Dorsolateral prefrontal cortex (tissue), 120 donors: ENCODE measurements at regions of chr1 and their contacts with region 1.

Region 1: GRCh38 chr1:8463144-8463927 is 145.4 kb downstream of the SLC45A1 start:
- DNase-seq: peak in 2 of 10 donors; percentile 37 to 52
- H3K4me3 ChIP-seq: peak overlapping the region in 24 of 59 donors; percentile 3 to 39 (median 20)
- H3K27ac ChIP-seq: peak overlapping the region; percentile 52 to 95 (median 86)
- H3K27me3 ChIP-seq: no peaks in the 10 kb centered on the region
- CTCF ChIP-seq: peak in 8 of 56 donors; percentile 5 to 36 (median 14)

Region 2: DNA sequence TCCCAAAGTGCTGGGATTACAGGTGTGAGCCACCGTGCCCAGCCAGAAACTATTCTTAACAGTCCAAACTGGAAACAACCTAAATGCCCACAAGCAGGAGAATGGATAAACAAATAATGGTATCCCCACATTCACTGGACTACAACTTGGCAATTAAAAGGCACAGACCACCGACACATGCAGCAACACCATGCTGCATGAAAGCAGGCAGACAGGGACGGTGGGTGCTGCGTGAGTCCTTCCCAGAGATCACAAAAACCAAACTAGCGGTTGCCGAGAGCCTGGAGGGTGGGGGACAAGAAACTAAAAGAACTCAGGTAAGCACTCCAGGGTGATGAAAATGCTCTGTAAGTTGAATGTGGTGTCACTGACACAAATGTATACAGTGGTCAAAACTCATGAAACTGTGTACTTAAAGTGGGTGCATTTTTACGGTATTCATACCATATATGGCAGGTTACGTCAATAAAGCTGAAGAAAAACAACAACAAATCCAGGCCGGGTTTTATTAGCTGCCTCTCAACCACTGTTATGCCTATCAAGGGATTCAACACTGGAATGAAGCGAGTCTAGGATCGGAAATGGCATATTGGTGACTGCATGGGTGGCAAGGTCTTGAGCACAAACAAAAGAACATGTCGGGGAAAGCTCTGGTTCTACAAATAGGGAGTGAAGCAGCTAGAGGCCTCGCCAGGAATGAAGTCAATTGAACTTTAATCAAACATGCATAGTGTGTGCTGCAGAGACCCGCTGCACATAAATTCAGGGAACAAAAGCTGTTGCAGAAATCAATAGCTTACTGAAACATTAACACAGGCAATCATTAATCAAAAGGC is 93.1 kb before region 1 on chr1:
- intact Hi-C with region 1: no loop called
- DNase-seq: peak in 1 of 10 donors; percentile 22
- H3K4me3 ChIP-seq: peak overlapping the region in 24 of 59 donors; percentile 4 to 36 (median 22)
- H3K27ac ChIP-seq: peak overlapping the region; percentile 4 to 92 (median 82)
- H3K27me3 ChIP-seq: no peaks in the 10 kb centered on the region
- CTCF ChIP-seq: no peak

Region 3: GRCh38 chr1:8423650-8424538 is 39.4 kb before region 1 on chr1:
- intact Hi-C with region 1: loop called in 1 of 2 experiments (anchors 5 kb)
- DNase-seq: peak in 3 of 10 donors; percentile 30 to 56 (median 37)
- H3K4me3 ChIP-seq: peak overlapping the region; percentile 55 to 89 (median 76)
- H3K27ac ChIP-seq: peak overlapping the region; percentile 42 to 99 (median 96)
- H3K27me3 ChIP-seq: no peaks in the 10 kb centered on the region
- CTCF ChIP-seq: peak in 4 of 56 donors; percentile 6 to 12 (median 11)

Region 4: GRCh38 chr1:8510041-8510823 is 46.9 kb after region 1 on chr1:
- intact Hi-C with region 1: loop called in 1 of 2 experiments (anchors 10 kb)
- DNase-seq: peak in 4 of 10 donors; percentile 53 to 64 (median 58)
- H3K4me3 ChIP-seq: peak overlapping the region in 39 of 59 donors; percentile 0 to 53 (median 25)
- H3K27ac ChIP-seq: peak overlapping the region; percentile 0 to 92 (median 82)
- H3K27me3 ChIP-seq: no peaks in the 10 kb centered on the region
- CTCF ChIP-seq: peak in 1 of 56 donors; percentile 7

Region 5: GRCh38 chr1:8524627-8525157 is 61.4 kb after region 1 on chr1:
- intact Hi-C with region 1: loop called (anchors 5 to 10 kb)
- DNase-seq: no peak
- H3K4me3 ChIP-seq: peak overlapping the region; percentile 45 to 93 (median 74)
- H3K27ac ChIP-seq: peak overlapping the region; percentile 24 to 98 (median 92)
- H3K27me3 ChIP-seq: no peaks in the 10 kb centered on the region
- CTCF ChIP-seq: no peak

Region 6: GRCh38 chr1:8660411-8660828 is 197.1 kb after region 1 on chr1:
- intact Hi-C with region 1: loop called in 1 of 2 experiments (anchors 10 kb)
- DNase-seq: peak; percentile 40 to 85 (median 74)
- H3K4me3 ChIP-seq: peak overlapping the region in 12 of 59 donors; percentile 1 to 34 (median 12)
- H3K27ac ChIP-seq: peak overlapping the region in 57 of 59 donors; percentile 13 to 88 (median 73)
- H3K27me3 ChIP-seq: no peaks in the 10 kb centered on the region
- CTCF ChIP-seq: no peak

Region 7: DNA sequence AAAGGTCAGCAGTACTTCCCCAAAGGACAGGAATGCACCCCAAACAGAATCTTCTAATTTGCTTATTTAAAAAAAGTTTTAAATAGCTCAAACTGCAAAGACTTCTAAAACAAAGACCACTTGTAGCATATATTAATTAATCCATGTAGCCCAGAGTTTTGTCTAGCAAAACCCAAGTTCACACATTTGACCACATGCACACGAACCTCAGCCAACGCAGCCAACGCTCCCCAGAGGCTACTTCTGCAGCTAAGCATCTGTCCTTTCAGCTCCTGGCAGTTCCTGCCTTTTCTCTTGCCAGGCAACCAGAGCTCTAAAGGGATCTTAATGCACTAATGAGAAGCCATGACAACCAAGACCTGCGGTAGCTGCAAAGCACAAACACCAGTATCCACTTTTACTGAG is 264.5 kb after region 1 on chr1:
- intact Hi-C with region 1: loop called in 1 of 2 experiments (anchors 10 kb)
- DNase-seq: peak in 4 of 10 donors; percentile 38 to 53 (median 46)
- H3K4me3 ChIP-seq: no peak overlapping the region
- H3K27ac ChIP-seq: peak overlapping the region in 38 of 59 donors; percentile 1 to 63 (median 38)
- H3K27me3 ChIP-seq: no peaks in the 10 kb centered on the region
- CTCF ChIP-seq: peak in 2 of 56 donors; percentile 4 to 5

Region 8: GRCh38 chr1:8848663-8849386 is 385.5 kb after region 1 on chr1:
- intact Hi-C with region 1: loop called (anchors 5 to 10 kb)
- DNase-seq: peak; percentile 79 to 91 (median 88)
- H3K4me3 ChIP-seq: peak overlapping the region in 32 of 59 donors; percentile 5 to 50 (median 27)
- H3K27ac ChIP-seq: peak overlapping the region in 54 of 59 donors; percentile 4 to 88 (median 68)
- H3K27me3 ChIP-seq: no peaks in the 10 kb centered on the region
- CTCF ChIP-seq: peak; percentile 81 to 99 (median 94)